Breast epithelium (tissue), 4 donors: ENCODE measurements at regions of chr4 and their contacts with region 1.

Region 1: DNA sequence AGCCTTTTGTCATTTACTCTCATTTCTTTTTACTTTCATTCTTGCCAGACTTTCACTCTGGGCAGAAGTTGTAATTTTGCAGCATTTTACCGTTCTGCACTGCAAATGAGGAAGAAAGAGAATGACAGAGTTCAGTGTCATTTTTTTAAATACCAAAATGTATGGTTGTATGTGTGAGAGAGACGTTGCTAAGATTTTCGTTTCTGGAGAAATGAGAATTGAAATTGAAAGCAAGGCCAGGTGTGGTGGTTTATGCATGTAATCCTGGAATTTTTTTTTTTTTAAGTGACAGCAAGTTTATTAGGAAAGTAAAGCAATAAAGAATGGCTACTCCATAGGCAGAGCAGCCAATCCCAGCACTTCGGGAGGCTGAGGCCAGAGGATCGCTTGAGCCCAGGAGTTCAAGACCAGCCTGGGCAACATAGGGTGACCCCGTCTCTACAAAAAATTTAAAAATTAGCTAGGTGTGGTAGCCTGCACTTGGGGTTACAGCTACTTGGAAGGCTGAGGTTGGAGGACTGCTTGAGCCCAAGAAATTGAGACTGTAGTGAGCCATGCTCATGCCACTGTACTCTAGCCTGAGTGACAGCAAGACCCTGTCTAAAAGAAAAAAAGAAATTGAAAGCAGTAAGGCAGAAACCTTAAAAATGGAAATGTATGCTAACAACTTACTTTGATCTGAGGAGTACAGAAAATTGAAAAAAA is 12.9 kb downstream of the DCK start:
- DNase-seq: no peak
- H3K4me3 ChIP-seq: no peak overlapping the region
- H3K27ac ChIP-seq: no peak overlapping the region
- H3K4me1 ChIP-seq: no peaks in the 10 kb centered on the region
- H3K27me3 ChIP-seq: no peaks in the 10 kb centered on the region
- CTCF ChIP-seq: no peak
- POLR2A ChIP-seq: no peak

Region 2: DNA sequence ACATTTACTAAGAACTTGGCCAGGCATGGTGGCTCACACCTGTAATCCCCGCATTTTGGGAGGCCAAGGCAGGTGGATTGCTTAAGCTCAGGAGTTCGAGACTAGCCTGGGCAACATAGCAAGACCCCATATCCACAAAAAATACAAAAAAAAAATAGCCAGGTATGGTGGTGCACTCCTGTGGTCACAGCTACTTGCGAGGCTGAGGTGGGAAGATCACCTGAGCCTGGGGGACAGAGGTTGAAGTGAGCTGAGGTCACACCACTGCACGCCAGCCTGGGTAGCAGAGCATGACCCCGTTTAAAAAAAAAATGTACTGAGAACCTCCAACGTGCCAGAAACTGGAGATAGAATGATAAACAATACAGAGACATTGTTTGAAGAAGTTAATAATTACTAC is 600.6 kb before region 1 on chr4:
- intact Hi-C with region 1: no loop called
- DNase-seq: no peak
- H3K4me3 ChIP-seq: no peak overlapping the region
- H3K27ac ChIP-seq: no peak overlapping the region
- H3K4me1 ChIP-seq: no peaks in the 10 kb centered on the region
- H3K27me3 ChIP-seq: no peaks in the 10 kb centered on the region
- CTCF ChIP-seq: no peak
- POLR2A ChIP-seq: no peak

Region 3: DNA sequence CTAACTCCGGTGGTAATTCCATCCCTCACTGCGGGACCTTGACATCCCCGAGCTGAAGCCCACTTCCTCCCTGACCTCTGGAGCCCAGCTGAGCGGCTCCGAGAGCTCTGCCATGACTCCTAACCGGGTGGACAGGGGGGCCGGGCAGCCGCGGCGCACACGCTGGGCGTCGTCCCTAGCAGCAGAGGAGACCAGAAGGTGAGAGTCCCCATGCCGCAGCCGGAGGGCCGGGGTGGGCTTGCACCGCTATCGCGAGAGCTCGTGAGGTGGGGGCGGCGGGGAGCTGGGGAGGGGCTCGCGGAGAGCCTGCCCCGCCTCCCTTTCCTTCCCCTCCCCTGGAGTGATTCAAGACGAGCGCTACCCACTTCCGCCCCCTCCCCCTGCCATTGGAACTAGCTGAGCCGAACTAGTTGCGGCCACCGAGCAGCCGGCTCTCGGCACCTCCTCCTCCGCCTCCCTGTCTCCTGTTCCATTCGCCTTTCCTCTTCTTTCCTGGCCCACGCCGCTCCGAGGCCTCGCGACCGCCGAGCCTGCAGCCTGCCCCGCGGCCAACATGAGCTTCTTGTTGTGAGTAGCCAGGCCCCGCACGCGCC is 104.3 kb before region 1 on chr4 and contains the start of gene MOB1B:
- intact Hi-C with region 1: loop called (anchors 2 kb)
- DNase-seq: peak; percentile 77 to 83
- H3K4me3 ChIP-seq: peak within 1 kb of the TSS; percentile 85 to 90 (median 87)
- H3K27ac ChIP-seq: peak within 1 kb of the TSS; percentile 84 to 92
- H3K4me1 ChIP-seq: no peaks in the 10 kb centered on the region
- H3K27me3 ChIP-seq: no peaks in the 10 kb centered on the region
- CTCF ChIP-seq: peak in 1 of 3 donors; percentile 21
- POLR2A ChIP-seq: no peak
- total RNA-seq, gene MOB1B: 13.3 to 27.8 (median 15.1) TPM

Region 4: DNA sequence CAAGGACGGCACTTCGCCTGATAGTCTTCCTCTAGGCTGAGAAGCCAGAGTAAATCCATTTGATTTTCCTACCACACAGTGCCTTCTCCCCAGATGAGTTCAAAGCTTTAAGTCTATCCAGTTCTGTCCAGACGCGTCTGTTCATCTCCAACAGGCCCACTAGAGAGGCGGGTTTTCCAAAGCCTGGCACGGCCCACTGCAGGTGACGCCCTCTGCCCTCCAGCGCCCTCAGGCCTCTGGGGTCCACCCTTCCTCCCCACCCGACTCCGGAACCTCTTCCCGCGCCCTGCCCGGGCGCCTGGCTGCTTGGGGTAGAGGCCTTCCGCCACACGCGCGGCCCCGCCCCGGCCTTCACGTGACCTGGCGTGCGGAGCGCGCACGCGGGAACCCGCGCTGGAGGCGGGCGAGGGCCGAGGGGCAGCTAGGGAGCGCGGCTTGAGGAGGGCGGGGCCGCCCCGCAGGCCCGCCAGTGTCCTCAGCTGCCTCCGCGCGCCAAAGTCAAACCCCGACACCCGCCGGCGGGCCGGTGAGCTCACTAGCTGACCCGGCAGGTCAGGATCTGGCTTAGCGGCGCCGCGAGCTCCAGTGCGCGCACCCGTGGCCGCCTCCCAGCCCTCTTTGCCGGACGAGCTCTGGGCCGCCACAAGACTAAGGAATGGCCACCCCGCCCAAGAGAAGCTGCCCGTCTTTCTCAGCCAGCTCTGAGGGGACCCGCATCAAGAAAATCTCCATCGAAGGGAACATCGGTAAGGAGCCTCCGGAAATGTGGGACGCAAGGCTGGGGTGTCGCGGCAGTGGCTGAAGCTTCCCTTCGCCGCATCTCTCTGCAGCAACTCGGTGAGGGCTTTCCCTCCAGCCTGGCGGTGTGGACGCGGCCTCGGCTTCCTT is 12.9 kb before region 1 on chr4 and contains the start of gene DCK:
- intact Hi-C with region 1: no loop called
- DNase-seq: peak; percentile 83
- H3K4me3 ChIP-seq: peak within 1 kb of the TSS; percentile 58 to 88 (median 79)
- H3K27ac ChIP-seq: peak within 1 kb of the TSS; percentile 96
- H3K4me1 ChIP-seq: no peaks in the 10 kb centered on the region
- H3K27me3 ChIP-seq: no peaks in the 10 kb centered on the region
- CTCF ChIP-seq: no peak
- POLR2A ChIP-seq: peak; percentile 46
- total RNA-seq, gene DCK: 11.8 to 23.0 (median 17.4) TPM

Region 5: DNA sequence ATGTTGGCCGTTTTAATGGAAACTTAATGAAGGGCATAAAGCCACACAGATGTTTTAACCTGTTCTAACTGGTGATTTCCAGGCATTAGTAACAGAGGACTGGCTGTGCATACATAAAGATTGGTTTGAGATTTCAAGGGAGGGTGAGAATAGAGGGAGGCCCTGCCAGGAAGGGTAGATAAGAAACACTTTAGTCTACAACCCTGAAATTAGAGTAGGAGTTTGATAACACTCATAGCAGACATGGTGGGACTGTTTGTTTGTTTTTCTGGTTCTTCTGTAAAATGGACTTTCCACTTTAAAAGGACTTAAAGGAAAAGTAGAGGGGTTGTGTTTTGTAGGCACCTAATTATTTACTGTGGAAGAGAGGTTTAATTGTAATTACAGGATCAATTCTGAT is 348.7 kb after region 1 on chr4:
- intact Hi-C with region 1: no loop called
- DNase-seq: no peak
- H3K4me3 ChIP-seq: no peak overlapping the region
- H3K27ac ChIP-seq: no peak overlapping the region
- H3K4me1 ChIP-seq: no peaks in the 10 kb centered on the region
- H3K27me3 ChIP-seq: no peaks in the 10 kb centered on the region
- CTCF ChIP-seq: no peak
- POLR2A ChIP-seq: no peak

Region 6: GRCh38 chr4:71486550-71487343 is 480.4 kb after region 1 on chr4:
- intact Hi-C with region 1: no loop called
- DNase-seq: no peak
- H3K4me3 ChIP-seq: no peak overlapping the region
- H3K27ac ChIP-seq: no peak overlapping the region
- H3K4me1 ChIP-seq: no peaks in the 10 kb centered on the region
- H3K27me3 ChIP-seq: no peaks in the 10 kb centered on the region
- CTCF ChIP-seq: no peak
- POLR2A ChIP-seq: no peak